ENCODE measurements at regions of chr4 and their contacts with region 1.

Region 1: GRCh38 chr4:85807247-85807950 is 332.4 kb downstream of the ARHGAP24 start:
- DNase-seq: peak; percentile 12

Region 2: GRCh38 chr4:85522277-85522676 is 285.1 kb before region 1 on chr4:
- in situ Hi-C with region 1: no loop called
- DNase-seq: no peak

Region 3: GRCh38 chr4:85557016-85557901 is 250.1 kb before region 1 on chr4:
- in situ Hi-C with region 1: no loop called
- DNase-seq: no peak

Region 4: DNA sequence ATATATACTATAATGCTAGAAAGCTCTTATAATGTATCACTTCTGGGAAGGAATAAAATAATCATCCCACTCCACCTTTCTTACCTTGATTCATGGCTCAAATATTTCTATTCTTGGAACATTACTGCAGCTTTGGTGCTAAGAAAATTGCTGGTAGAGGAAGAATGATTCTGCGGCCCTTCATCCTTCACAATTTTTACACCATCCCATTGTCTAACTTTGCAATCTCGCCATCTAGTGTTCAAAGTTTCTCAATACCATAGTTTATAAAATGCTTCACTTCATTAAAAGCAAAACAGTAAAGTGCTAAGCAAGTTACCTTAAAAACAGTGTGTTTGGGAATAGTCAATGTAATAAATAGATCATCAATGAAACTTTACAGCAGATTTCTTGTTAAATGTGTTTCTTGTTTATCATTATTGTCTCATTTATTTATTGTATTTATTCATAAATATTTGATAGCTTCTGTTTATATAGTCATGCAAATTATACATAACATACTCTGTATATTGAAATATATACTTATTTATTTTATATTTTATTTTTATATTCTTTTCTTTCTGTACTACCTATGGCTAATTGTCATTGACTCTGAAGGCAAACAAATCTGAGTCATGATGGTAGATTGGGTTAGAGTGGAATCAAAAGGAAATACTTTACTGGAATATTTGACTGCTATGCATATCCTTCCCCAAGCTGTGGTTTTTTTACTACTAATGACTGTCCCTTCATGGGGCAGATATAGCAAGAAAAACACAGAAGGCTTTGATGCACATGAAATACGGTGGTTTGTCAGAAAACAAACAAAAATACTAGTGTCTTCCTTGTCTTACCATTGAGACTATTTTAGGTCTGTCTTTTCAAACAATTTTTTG is 161.8 kb after region 1 on chr4:
- in situ Hi-C with region 1: no loop called
- DNase-seq: peak; percentile 50

Region 5: DNA sequence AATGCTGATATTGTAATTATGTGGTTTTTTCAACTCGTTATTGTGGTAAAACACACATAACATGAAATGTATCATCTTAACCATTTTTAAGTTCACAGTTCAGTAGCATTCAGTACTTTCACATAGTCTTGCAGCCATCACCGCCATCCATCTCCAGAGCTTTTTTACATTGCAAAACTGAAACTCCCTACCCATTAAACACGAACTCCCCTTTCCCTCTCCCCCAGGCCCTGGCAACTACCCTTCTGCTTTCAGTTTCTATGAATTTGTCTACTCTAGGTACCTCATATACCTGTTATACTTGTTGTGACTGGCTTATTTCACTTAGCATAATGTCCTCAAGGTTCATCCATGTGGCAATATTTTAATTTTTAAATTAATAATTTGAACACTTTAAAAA is 171.9 kb after region 1 on chr4:
- in situ Hi-C with region 1: loop called (anchors 25 kb)
- DNase-seq: no peak

Measured in Caki2 (cell line).